ENCODE measurements at regions of chr7 and their contacts with region 1.

Region 1: GRCh38 chr7:76179686-76180085 is 22.0 kb upstream of the SRRM3 start:
- DNase-seq: no peak
- ATAC-seq: no peak
- H3K4me3 ChIP-seq: no peak overlapping the region
- H3K27ac ChIP-seq: no peak overlapping the region
- H3K4me1 ChIP-seq: no peaks in the 10 kb centered on the region
- H3K27me3 ChIP-seq: no peaks in the 10 kb centered on the region
- CTCF ChIP-seq: no peak

Region 2: GRCh38 chr7:76262683-76263402 is 83.2 kb after region 1 on chr7:
- CTCF ChIA-PET with region 1: interaction called, 10 read pairs
- POLR2A ChIA-PET with region 1: interaction called, 7 read pairs
- intact Hi-C with region 1: loop called (anchors 1 kb)
- DNase-seq: peak; percentile 73
- ATAC-seq: peak; percentile 93
- H3K4me3 ChIP-seq: no peak overlapping the region
- H3K27ac ChIP-seq: no peak overlapping the region
- H3K4me1 ChIP-seq: no peaks in the 10 kb centered on the region
- H3K27me3 ChIP-seq: no peaks in the 10 kb centered on the region
- CTCF ChIP-seq: peak; percentile 83

Region 3: GRCh38 chr7:76314042-76314721 is 134.5 kb after region 1 on chr7:
- CTCF ChIA-PET with region 1: interaction called, 6 read pairs
- POLR2A ChIA-PET with region 1: no interaction called
- intact Hi-C with region 1: loop called (anchors 1 kb)
- DNase-seq: peak; percentile 91
- ATAC-seq: peak; percentile 51
- H3K4me3 ChIP-seq: no peak overlapping the region
- H3K27ac ChIP-seq: no peak overlapping the region
- H3K4me1 ChIP-seq: peaks cover 12% of the 10 kb centered on the region
- H3K27me3 ChIP-seq: no peaks in the 10 kb centered on the region
- CTCF ChIP-seq: peak; percentile 99